ENCODE measurements at regions of chr19 and their contacts with region 1.

Region 1: DNA sequence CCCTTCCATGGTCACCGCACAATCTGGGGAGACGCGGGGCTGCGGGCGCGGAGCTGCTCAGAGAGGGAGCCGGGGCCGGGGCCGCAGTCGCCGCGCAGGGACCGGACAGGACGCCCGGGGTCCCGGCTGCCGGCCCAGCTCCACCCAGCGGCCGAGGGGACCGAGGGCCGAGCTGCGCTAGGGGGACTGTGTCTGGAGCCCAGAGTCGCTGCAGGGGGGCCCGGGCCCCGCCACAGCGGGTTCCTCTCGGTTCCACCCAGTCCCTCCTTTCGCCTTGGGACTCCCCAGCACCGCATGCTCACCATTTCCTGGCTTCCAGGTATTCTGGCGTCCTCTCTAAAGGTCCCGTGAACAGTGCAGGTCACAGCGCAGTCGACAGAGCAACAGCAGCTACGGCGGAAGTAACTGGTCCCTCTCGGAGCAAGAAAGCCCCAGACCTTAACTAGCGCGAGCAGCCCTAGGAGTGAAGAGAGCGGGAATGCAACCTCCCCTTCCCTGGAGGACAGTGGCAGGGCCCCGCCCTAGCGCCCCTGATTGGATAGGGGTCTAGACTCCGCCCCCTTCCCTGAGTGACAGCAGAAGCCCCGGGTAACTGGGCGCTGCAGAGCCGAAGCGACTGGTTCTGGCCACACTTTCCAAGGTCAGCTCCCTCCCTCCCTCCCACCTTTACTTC is at the start of gene ZNF878:
- DNase-seq: peak; percentile 67
- ATAC-seq: peak; percentile 96
- H3K4me3 ChIP-seq: peak within 1 kb of the TSS; percentile 86
- H3K27ac ChIP-seq: peak within 1 kb of the TSS; percentile 67
- H3K4me1 ChIP-seq: no peaks in the 10 kb centered on the region
- H3K27me3 ChIP-seq: no peaks in the 10 kb centered on the region
- CTCF ChIP-seq: peak; percentile 12 to 26 (median 18); a peak in 3 of 6 replicates
- EP300 ChIP-seq: no peak
- POLR2A ChIP-seq: peak; percentile 92
- RAD21 ChIP-seq: no peak
- polyA plus RNA-seq, gene ZNF878: 0.24 to 0.79 TPM

Region 2: GRCh38 chr19:12000152-12000981 is 52.3 kb before region 1 on chr19:
- CTCF ChIA-PET with region 1: interaction called, 5 read pairs
- POLR2A ChIA-PET with region 1: no interaction called
- RAD21 ChIA-PET with region 1: interaction called, 10 read pairs
- SMC1A ChIA-PET with region 1: interaction called, 3 read pairs
- in situ Hi-C with region 1: no loop called
- intact Hi-C with region 1: loop called (anchors 5 kb)
- DNase-seq: peak; percentile 85
- ATAC-seq: peak; percentile 91
- H3K4me3 ChIP-seq: peak overlapping the region; percentile 42; the same call in 1 of the 2 replicates
- H3K27ac ChIP-seq: peak overlapping the region; percentile 66
- H3K4me1 ChIP-seq: peaks cover 16% of the 10 kb centered on the region
- H3K27me3 ChIP-seq: no peaks in the 10 kb centered on the region
- CTCF ChIP-seq: no peak
- EP300 ChIP-seq: peak; percentile 65 to 88; a peak in 2 of 4 replicates
- POLR2A ChIP-seq: no peak
- RAD21 ChIP-seq: no peak

Region 3: DNA sequence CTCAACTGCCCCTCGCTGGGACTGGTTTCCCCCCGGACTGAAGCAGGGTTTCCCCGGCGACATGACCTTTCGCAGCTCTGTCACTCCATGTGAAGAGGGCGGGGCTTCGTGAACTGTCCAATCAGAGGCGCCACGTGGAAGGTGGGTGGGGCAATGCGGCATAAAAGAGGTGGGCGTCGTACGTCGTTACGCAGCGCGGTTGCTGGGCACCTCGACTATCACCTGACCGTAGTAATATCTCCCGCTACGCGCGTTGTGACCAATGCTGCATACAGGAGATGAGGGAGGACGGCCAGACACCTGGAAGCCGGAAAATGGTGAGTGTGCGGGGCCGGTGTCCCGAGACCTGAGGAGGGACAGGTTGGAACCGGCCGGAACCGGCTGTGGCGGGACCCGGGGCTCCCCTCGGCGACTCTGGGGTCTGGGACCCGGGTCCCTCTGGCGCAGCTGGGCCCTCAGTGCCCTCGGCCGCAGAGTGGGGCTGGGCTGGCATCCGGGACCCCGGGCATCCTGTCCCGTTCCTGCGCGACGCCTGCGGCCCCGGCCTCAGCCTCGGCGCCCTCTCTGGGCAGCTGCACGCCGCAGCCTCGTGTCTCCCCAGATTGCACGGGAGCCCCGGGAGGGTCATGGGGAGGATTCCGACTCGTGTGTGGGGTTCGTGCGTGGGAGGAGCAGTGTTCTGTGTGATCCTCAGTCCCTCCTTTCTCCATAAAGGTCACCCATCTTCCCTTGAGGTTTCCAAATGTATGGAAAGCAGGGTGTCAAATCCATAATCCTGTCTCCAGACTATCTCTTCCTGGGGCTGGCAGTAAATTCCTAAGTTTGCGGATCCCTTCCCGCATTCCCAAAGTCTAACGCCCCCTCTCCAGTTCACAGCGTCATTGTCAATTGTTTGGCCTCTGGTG is 142.4 kb after region 1 on chr19:
- CTCF ChIA-PET with region 1: no interaction called
- POLR2A ChIA-PET with region 1: no interaction called
- RAD21 ChIA-PET with region 1: no interaction called
- SMC1A ChIA-PET with region 1: no interaction called
- in situ Hi-C with region 1: no loop called
- intact Hi-C with region 1: no loop called
- DNase-seq: no peak
- ATAC-seq: no peak
- H3K4me3 ChIP-seq: no peak overlapping the region
- H3K27ac ChIP-seq: no peak overlapping the region
- H3K4me1 ChIP-seq: no peaks in the 10 kb centered on the region
- H3K27me3 ChIP-seq: no peaks in the 10 kb centered on the region
- CTCF ChIP-seq: no peak
- EP300 ChIP-seq: no peak
- POLR2A ChIP-seq: no peak; the same call in 1 of the 2 replicates
- RAD21 ChIP-seq: no peak

Measured in GM12878 (cell line).